ENCODE measurements at regions of chr6 and their contacts with region 1.

Region 1: GRCh38 chr6:24809728-24810127 is 11.0 kb upstream of the ARMH2 start:
- DNase-seq: no peak
- ATAC-seq: no peak
- H3K4me3 Mint-ChIP-seq: peak overlapping the region in 1 of 10 donors; percentile 61
- H3K27ac Mint-ChIP-seq: peak overlapping the region in 9 of 10 donors; percentile 11 to 83 (median 52)
- H3K4me1 Mint-ChIP-seq: peaks cover 0 to 4% (median 0%) of the 10 kb centered on the region in 4 donors
- H3K27me3 Mint-ChIP-seq: no peaks in the 10 kb centered on the region

Region 2: GRCh38 chr6:24824142-24824938 is 14.6 kb after region 1 on chr6:
- POLR2A ChIA-PET with region 1: interaction called, 10 read pairs
- DNase-seq: no peak
- ATAC-seq: no peak
- H3K4me3 Mint-ChIP-seq: peak overlapping the region in 1 of 10 donors; percentile 7
- H3K27ac Mint-ChIP-seq: peak overlapping the region in 9 of 10 donors; percentile 15 to 75 (median 34)
- H3K4me1 Mint-ChIP-seq: peaks cover 7 to 30% (median 24%) of the 10 kb centered on the region in 4 donors
- H3K27me3 Mint-ChIP-seq: no peaks in the 10 kb centered on the region